ENCODE measurements at regions of chr17 and their contacts with region 1.

Region 1: GRCh38 chr17:75319904-75320691 is 30.9 kb upstream of the SLC25A19 start:
- DNase-seq: no peak
- H3K4me3 ChIP-seq: no peak overlapping the region
- CTCF ChIP-seq: no peak

Region 2: DNA sequence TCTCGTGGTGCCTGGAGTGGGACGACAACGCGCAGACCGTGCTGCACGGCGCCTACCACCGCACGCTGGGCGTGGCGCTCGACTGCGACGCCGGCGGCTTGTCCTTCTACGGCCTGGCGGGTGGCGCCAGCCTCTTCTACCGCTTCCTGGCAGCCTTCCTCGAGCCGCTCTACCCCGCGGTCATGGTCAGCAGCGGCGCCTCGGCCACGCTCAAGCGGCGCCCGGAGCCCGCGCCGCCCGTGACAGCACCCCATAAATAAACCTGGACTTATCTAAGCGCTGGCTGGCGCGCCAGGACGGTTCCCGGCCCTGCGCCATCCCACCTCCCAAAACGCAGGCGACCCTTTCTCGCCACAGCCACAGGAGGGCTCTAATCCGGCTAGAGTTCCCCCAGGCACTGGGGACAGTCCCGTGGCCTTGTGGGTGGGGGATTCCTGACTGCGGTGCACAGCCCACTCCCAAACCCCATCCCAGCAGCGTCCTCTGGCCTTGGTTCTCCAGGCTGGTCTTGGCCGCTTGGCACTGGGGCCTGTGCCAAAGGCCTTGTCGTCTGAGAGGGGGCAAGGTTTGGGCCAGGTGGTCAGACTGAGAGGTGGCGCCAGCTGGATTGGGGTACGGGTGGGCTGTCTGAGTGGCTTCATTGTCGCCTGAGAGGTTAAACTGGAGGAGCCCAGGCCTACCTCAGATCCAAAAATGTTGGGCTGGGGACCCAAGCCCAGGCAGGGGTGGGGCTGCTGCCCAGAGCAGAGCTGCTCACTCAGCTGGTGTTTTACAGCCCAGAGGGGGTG is 242.4 kb before region 1 on chr17:
- CTCF ChIA-PET with region 1: no interaction called
- POLR2A ChIA-PET with region 1: no interaction called
- DNase-seq: no peak
- H3K4me3 ChIP-seq: no peak overlapping the region
- CTCF ChIP-seq: peak; percentile 8

Region 3: GRCh38 chr17:75205037-75205792 is 114.9 kb before region 1 on chr17 and contains the start of gene NUP85:
- CTCF ChIA-PET with region 1: no interaction called
- POLR2A ChIA-PET with region 1: no interaction called
- DNase-seq: peak; percentile 31
- H3K4me3 ChIP-seq: peak within 1 kb of the TSS; percentile 100
- CTCF ChIP-seq: no peak

Region 4: GRCh38 chr17:75295201-75296158 is 24.6 kb before region 1 on chr17:
- CTCF ChIA-PET with region 1: interaction called, 46 read pairs
- POLR2A ChIA-PET with region 1: no interaction called
- DNase-seq: no peak
- H3K4me3 ChIP-seq: no peak overlapping the region
- CTCF ChIP-seq: no peak

Region 5: DNA sequence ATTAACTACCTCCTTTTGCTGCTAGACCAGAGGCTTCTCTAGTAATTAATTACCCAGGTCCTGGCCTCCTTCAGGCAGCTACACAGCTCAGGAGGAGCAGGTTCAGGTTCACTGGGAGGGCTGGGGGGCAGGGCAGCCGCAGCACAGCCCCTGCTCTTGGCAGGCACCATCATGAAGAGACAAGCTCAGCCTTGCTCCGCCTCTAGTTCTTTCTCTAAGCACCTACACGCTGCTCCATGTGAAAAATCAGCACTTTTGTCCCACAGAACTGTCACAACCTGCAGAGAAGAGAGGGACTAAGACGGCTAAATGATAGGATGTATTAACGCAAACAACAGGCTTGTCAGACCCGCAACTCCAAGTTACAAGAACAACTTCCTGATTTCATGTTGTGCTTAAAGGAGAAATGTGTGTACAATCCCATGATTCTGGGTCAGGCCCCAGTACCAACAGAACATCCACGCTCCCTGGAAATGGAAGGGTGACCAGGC is 32.0 kb after region 1 on chr17:
- CTCF ChIA-PET with region 1: interaction called, 19 read pairs
- POLR2A ChIA-PET with region 1: no interaction called
- DNase-seq: no peak
- H3K4me3 ChIP-seq: no peak overlapping the region
- CTCF ChIP-seq: no peak

Region 6: DNA sequence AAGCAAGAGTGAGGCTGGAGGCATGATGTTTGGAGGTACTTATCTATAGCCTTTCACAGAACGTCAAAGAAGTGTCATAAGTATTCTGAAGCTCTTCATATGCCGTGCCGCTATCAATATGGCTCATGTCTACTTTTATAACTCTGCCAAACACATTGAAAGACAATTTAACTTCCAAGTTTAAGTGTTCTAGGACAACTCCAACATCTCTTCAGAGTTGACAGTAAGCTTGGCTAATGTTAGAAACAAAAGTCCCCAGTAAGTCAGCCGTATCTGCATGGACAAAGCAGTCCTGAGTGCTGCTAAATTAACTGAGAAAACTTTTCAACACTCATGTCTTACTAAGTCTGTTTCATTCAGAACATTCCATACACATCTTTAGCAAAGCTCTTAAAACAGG is 53.2 kb after region 1 on chr17:
- CTCF ChIA-PET with region 1: interaction called, 25 read pairs
- POLR2A ChIA-PET with region 1: no interaction called
- DNase-seq: no peak
- H3K4me3 ChIP-seq: no peak overlapping the region
- CTCF ChIP-seq: no peak

Region 7: DNA sequence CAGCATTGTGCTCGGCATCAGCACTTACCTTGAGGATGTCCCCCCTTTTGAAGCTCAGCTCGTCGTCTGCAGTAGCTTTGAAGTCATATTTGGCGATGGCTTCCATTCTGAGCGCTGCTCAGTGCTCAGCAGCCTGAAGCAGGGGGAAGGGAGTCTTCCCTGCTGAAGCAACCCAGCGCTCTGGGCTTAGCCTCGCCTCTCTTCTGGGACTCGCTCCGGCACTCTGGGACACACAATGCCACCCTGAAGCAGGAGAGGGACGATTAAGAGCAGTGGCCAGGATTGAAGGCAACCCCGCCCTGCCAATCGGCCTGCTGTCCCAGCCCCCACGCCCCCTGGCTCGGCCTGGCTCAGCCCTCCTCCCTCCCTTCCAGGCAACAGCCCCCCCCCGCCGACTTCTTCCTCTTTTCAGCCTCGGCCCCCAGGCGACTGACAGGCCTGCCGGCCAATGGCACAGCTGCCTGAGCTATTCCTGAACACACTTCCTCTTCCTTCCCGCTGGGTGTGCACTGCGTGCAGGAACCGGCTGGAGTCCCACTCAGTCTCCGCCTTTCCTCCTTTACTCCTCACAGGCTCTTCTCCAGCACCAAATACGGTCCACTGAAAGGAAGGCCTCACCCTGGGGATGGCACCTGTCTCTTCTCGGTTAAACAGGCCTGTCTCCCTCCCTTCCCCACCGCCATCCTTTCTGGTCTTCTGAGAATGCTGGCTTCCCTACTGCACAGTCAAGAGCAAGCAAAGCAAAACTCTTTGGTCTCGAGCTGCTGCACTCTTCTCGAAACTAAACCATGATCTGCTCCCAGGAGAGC is 73.6 kb after region 1 on chr17:
- CTCF ChIA-PET with region 1: interaction called, 148 read pairs
- POLR2A ChIA-PET with region 1: no interaction called
- DNase-seq: peak; percentile 93
- H3K4me3 ChIP-seq: peak overlapping the region; percentile 88
- CTCF ChIP-seq: no peak

Region 8: GRCh38 chr17:75412455-75413317 is 92.6 kb after region 1 on chr17:
- CTCF ChIA-PET with region 1: interaction called, 74 read pairs
- POLR2A ChIA-PET with region 1: no interaction called
- DNase-seq: no peak
- H3K4me3 ChIP-seq: peak overlapping the region; percentile 20
- CTCF ChIP-seq: peak; percentile 83

Region 9: DNA sequence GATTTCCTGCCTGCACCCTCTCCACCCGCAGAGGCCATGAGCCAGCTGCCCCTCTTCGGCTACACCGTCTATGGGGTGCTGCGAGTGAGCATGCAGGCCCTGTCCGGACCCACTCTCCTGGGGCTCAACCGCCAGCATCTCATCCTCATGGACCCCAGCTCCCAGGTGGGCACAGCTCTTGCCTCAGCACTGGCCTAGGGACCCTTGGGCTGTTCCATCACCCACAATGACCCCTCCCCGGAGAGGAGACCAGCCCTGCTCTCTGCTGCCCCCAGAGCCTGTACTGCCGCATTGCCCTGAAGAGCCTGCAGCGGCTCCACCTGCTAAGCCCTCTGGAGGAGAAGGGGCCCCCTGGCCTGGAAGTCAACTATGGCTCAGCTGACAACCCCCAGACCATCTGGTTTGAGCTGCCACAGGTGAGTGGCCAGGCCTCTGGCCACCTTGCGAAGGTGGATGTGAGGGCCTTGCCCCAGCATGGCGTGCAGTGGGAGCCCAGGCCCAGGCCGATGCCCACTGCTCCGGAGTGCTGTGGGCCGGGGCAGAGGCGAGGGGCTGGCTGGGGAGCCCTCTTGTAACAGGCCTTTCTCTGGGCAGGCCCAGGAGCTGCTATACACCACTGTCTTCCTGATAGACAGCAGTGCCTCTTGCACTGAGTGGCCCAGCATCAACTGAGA is 305.9 kb after region 1 on chr17:
- CTCF ChIA-PET with region 1: no interaction called
- POLR2A ChIA-PET with region 1: no interaction called
- DNase-seq: no peak
- H3K4me3 ChIP-seq: no peak overlapping the region
- CTCF ChIP-seq: peak; percentile 71